ENCODE measurements at regions of chr10 and their contacts with region 1.

Region 1: GRCh38 chr10:59181668-59182067 is 5.2 kb downstream of the PHYHIPL start:
- DNase-seq: peak in 1 of 10 donors; percentile 18
- H3K4me3 ChIP-seq: peak overlapping the region in 56 of 59 donors; percentile 6 to 93 (median 76)
- H3K27ac ChIP-seq: peak overlapping the region in 53 of 59 donors; percentile 1 to 98 (median 71)
- H3K27me3 ChIP-seq: no peaks in the 10 kb centered on the region
- CTCF ChIP-seq: peak; percentile 23 to 85 (median 69)

Region 2: DNA sequence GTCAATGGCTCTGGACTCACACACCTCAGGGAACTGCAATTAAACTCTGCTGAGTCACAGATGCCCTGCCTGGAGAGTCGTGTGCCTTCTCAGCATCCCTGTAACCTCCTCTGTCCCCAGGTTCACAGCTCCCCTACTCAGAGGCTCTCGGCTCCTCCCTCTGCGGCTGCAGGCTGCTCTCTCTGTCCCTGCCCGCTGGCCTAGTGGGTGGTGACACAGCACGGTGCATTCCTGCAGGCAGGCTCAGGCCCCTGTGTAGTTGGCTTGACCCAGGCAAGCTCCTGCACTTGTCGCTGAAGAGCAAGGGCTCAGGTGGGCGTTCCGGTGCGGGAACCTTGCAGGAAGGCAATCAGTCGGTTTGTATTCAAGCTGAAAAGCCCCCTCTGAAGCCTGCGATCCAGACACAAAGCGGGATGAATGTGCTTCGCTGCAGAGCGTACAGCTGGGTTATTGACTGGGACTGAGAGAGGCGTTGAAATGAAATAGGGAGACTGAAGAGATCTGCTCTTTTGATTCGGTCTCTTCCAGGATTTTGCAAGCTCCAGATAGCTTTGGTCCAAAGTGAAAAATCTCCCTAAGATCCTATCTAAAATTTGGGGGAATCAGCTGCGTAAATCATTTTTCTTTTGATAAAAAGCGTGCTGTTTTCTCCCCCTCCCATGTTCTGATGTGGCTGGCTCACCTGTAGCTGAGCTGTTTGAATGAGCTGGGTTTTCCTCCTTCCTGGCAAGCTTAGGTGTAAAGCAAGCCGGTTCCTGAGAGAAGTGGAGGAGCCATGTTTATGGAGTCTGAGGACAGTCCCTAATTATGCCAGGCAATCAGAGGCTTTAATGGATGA is 213.9 kb before region 1 on chr10:
- intact Hi-C with region 1: loop called in 1 of 2 experiments (anchors 2 kb)
- DNase-seq: peak; percentile 58 to 88 (median 74)
- H3K4me3 ChIP-seq: peak overlapping the region in 55 of 59 donors; percentile 5 to 61 (median 38)
- H3K27ac ChIP-seq: peak overlapping the region; percentile 79 to 99 (median 96)
- H3K27me3 ChIP-seq: no peaks in the 10 kb centered on the region
- CTCF ChIP-seq: peak in 2 of 56 donors; percentile 10 to 13

Region 3: DNA sequence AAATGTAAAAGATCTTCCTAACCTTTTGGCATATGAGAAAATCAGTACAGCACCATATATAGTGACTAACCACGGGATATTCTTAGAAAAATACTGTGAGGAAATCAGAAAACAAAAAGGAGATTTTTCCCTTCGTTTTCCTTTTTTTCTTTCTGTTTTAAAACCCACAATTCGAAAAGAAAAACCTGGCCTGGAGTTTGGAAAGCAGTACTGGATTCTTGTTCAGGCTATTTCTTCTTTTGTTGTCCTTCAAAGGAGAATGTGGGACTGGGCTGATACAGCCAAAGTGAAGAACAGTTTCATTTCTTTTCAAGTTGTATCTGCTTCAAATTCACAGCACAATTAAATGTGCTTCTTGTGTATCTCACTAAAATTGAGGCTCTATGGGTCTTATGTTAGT is 162.1 kb before region 1 on chr10:
- intact Hi-C with region 1: loop called in 1 of 2 experiments (anchors 5 kb)
- DNase-seq: no peak
- H3K4me3 ChIP-seq: peak overlapping the region in 52 of 59 donors; percentile 0 to 55 (median 24)
- H3K27ac ChIP-seq: peak overlapping the region; percentile 73 to 99 (median 92)
- H3K27me3 ChIP-seq: no peaks in the 10 kb centered on the region
- CTCF ChIP-seq: peak in 2 of 56 donors; percentile 4 to 11

Region 4: GRCh38 chr10:59057345-59057744 is 124.3 kb before region 1 on chr10:
- intact Hi-C with region 1: no loop called
- DNase-seq: peak in 1 of 10 donors; percentile 42
- H3K4me3 ChIP-seq: no peak overlapping the region
- H3K27ac ChIP-seq: peak overlapping the region in 31 of 59 donors; percentile 2 to 65 (median 24)
- H3K27me3 ChIP-seq: no peaks in the 10 kb centered on the region
- CTCF ChIP-seq: no peak

Region 5: DNA sequence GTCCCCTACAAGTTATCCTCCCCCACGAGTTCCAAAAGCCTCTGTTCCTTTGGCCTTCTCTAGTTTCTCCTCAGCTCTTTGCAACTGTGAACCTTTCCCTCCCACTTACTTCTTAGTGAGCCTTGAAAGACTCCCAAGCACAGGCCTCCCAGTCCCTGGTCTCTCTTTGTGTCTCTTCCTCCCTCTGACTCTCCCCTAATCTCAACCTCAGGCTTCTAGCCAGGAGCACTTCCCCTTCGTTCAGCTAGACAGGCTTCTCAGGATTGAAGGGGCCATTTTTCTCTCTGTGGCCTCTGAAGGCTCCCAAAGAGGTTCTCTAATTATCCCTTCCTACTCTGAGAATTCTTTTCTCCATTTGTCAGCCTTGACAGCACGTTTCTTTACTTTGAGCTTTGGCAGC is 55.4 kb before region 1 on chr10:
- intact Hi-C with region 1: loop called in 1 of 2 experiments (anchors 5 kb)
- DNase-seq: no peak
- H3K4me3 ChIP-seq: no peak overlapping the region
- H3K27ac ChIP-seq: peak overlapping the region in 16 of 59 donors; percentile 4 to 56 (median 20)
- H3K27me3 ChIP-seq: no peaks in the 10 kb centered on the region
- CTCF ChIP-seq: no peak

Region 6: GRCh38 chr10:59167512-59167911 is 14.2 kb before region 1 on chr10:
- intact Hi-C with region 1: no loop called
- DNase-seq: no peak
- H3K4me3 ChIP-seq: no peak overlapping the region
- H3K27ac ChIP-seq: no peak overlapping the region
- H3K27me3 ChIP-seq: no peaks in the 10 kb centered on the region
- CTCF ChIP-seq: no peak

Region 7: DNA sequence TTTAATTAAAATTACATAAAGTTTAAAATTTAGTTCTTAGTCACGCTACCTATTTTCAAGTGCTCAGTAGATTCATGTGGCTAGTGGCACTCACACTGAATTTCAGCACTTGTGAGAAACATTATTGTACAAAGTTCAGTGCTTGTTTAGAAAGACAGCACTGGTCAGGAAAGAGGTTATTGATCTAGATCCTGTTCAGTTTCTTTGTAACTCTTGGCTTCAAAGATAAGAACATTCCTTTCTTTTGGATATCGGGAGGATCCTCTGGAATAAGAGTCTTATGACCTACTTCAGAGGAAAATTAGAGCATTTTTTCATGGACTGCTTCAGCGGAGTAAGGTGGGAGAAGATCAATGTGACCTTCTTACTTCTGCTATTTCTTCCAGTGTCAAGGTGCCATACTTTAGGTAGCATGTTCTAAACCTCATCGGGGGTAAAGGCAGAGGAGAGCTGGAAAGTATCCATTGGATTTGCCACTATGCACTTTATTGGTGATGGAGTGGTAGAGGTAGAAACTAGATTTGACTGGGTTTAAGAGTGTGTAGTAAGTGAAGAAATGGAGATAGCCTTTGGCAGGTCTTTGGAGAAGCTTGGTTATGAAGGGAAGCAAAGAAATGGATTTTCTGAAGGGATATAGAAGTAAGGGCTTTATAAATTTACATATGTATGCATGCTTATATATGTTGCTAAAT is 34.7 kb after region 1 on chr10:
- intact Hi-C with region 1: no loop called
- DNase-seq: no peak
- H3K4me3 ChIP-seq: no peak overlapping the region
- H3K27ac ChIP-seq: peak overlapping the region in 13 of 59 donors; percentile 1 to 67 (median 13)
- H3K27me3 ChIP-seq: no peaks in the 10 kb centered on the region
- CTCF ChIP-seq: no peak

Region 8: DNA sequence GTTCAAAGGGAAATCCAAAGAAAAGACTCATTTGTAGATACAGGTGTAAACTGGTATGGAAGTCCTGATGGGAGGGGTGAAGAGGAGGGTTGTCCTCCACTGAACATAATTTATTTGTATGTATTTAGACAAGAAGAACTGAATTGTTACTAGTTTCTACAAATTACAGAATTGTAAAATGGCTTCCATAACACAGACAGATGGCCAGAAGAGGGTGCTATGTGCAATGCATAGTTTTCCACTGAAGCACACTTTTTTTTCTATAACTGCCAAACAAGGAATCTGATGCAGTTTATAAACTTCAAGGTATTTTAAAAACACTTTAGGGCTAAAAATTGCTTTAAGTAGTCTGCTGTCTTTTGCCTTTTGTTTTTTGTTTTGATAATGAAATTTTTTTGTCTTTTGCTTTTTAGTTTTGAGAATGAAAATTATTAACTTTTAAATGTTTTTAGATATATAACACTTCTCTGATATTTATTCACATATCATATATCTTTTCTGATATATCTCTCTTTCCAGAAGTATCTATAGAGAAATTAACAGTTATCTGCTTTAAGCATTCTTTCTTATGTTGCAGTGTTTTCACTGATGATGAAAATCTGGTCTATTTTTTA is 53.3 kb after region 1 on chr10:
- intact Hi-C with region 1: loop called (anchors 5 kb)
- DNase-seq: no peak
- H3K4me3 ChIP-seq: no peak overlapping the region
- H3K27ac ChIP-seq: peak overlapping the region in 39 of 59 donors; percentile 0 to 84 (median 47)
- H3K27me3 ChIP-seq: no peaks in the 10 kb centered on the region
- CTCF ChIP-seq: peak; percentile 34 to 83 (median 68)

Region 9: GRCh38 chr10:59470570-59470969 is 288.9 kb after region 1 on chr10:
- intact Hi-C with region 1: no loop called
- DNase-seq: no peak
- H3K4me3 ChIP-seq: no peak overlapping the region
- H3K27ac ChIP-seq: no peak overlapping the region
- H3K27me3 ChIP-seq: no peaks in the 10 kb centered on the region
- CTCF ChIP-seq: no peak

Region 10: DNA sequence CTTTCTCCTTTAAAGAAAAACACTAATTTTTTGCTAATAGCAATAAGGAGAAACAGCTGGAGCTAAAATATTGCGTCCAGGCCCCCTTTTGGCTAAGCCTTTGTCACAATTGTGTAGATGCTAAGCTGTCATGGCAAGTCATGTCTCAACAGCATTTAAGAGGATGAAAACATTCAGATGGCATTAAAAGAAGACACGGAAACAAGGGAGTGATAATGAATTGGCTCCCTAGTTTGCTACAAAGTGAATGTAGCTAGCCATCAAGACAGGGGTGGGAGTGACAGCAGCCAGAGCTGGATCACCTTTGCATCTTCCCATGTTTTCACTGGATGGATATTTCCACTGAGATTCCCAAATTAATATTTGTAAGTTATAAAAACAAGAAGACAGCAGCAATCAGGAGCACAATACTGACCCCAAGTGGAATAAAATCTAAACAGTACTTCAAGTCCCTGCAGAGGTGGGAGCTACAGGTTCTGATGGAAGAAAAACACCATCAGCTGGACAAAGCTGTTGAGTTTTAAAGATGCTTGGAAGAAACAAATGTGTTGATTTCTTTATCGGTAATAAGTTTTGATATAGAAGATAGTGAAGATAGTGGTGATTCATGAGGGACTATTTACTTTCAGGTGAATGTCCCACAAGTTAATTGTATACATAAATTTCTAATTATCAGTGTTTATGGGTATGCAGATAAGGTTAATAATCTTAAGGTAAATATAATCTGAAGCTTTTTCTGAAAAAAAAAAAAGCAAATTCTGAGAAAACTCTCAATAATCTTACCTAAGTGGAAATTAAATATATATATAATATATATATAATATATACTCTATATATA is 398.6 kb after region 1 on chr10:
- intact Hi-C with region 1: loop called in 1 of 2 experiments (anchors 10 kb)
- DNase-seq: no peak
- H3K4me3 ChIP-seq: peak overlapping the region in 1 of 59 donors; percentile 22
- H3K27ac ChIP-seq: peak overlapping the region in 33 of 59 donors; percentile 2 to 81 (median 46)
- H3K27me3 ChIP-seq: no peaks in the 10 kb centered on the region
- CTCF ChIP-seq: peak; percentile 35 to 86 (median 72)

Measured in dorsolateral prefrontal cortex (tissue), 120 donors.